Left cardiac atrium (tissue), 4 donors: ENCODE measurements at regions of chr3 and their contacts with region 1.

Region 1: GRCh38 chr3:107271787-107272387 is 105.4 kb upstream of the CCDC54 start:
- DNase-seq: no peak
- ATAC-seq: peak; percentile 41 to 63

Region 2: DNA sequence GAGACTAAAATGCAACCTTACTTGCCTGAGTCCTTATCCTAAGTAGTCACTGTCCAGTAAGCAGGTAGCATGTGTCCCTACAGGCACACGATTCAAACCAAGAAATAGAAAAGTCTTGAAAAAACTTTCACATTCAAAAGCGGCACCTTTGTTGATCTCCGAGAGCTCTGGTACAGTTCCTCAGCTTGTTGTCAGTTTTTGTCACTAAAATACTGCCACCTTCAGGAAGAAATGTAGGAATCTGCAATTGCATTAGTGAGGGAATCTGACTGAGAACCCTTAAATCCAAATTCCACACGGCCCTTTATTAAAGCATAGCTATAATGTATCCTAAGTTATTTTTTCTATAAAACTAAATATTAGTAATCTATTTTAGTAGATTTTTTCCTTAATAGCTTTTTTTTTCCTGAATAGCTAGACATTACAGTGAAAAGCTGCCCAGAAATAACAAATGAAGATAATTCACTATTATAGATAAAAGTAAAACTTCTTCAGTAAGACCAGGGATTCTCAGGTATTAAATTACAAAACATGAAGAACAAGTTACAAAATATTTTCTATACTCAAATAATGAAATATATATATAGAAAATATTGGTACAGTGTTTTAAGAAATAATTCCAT is 149.4 kb after region 1 on chr3:
- intact Hi-C with region 1: loop called (anchors 2 to 10 kb)
- DNase-seq: no peak
- ATAC-seq: peak; percentile 47 to 74

Region 3: DNA sequence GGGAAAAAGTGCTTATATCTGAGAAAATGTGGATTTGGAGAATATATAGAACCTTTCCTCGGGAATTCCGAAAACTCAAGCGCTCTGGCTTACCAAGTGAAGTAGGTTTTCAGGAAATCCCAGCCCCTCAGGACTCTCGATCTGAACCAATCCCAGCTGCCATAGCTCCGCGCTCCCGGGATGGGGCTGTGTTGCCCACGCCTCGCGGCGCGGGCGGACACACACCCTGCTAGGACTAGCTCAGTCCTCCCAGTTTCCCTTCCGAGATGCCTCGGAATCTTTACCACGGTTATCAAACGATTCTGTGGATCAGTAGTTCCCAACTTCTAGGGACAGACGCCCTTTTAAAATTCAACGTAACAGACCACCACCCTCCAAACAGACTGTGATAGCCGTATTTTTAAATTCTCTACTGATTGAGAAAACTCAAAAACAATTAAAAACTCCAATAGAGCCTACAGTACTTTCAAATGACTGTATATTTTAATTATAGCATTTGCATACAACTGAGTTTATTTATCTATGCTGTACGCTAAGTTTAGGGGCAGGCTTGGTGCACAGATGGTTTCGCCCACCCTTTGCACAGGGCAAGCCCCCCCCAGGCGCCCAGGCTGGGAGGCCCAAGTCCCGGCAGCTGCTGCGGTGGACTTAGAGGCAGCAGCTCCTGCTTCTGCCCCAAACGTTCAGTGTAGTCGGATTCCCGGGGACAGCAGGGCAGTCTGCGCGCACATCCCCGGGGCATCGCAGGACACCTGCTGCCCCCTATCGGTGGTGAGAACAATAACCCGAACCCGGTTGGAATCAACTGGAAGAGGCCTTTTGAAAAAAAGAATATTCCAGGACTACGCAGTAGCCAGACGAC is 157.7 kb after region 1 on chr3:
- intact Hi-C with region 1: loop called in 1 of 2 experiments (anchors 10 kb)
- DNase-seq: peak; percentile 79
- ATAC-seq: peak; percentile 82 to 88